ENCODE measurements at regions of chr1 and their contacts with region 1.

Region 1: DNA sequence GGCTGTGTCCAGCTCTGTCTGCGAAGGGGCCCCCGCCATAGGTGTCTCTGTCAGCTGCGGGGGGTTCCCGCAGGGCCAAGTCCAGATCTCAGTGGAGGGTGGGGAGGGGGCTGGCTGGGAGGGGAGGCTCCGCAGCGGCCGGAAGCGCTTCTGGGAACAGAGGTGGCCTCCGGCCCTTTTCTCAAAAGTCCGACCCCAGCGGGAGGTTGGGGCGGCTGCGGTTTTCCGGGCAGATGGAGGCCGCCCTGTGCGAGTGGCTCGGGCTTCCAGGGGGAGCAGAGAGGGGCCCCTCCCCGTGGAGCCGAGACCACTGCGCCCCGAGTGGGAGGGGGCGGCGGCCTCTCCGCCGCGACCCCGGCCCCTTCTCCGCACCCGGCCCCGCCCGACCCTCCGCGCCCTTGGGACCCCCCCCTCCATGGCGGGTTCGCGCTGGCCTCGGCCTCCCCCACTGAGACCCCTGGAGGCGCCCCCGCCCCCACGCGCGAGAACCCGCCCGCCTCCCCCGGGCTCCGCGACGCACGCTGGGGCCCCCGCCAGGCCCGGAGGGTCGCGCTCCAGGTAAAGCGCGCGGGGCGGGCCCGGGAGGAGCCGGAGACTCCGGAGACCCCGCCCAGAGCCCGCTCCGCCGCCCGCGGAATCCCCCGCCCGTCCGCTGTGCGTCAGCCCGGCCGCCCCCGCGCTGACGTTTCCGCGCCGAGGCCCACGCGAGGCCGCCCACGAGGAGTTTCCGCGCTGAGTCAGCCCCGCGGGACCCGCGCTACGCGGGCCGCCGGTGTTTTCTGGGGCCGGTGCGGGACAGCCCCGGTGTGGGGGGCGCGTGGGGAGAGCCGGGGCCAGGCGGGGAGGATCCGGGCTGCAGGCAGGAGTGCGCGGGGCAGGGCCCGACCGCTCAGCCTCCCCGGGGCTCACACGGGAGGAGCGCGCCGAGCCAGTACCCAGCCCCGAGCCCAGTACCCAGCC is 5.3 kb downstream of the TNFRSF18 start:
- DNase-seq: peak; percentile 88
- ATAC-seq: peak; percentile 85
- H3K4me3 Mint-ChIP-seq: peak overlapping the region; percentile 44
- H3K27ac Mint-ChIP-seq: peak overlapping the region; percentile 59
- H3K4me1 Mint-ChIP-seq: peaks cover 18% of the 10 kb centered on the region
- H3K27me3 Mint-ChIP-seq: no peaks in the 10 kb centered on the region
- CTCF ChIP-seq: no peak

Region 2: DNA sequence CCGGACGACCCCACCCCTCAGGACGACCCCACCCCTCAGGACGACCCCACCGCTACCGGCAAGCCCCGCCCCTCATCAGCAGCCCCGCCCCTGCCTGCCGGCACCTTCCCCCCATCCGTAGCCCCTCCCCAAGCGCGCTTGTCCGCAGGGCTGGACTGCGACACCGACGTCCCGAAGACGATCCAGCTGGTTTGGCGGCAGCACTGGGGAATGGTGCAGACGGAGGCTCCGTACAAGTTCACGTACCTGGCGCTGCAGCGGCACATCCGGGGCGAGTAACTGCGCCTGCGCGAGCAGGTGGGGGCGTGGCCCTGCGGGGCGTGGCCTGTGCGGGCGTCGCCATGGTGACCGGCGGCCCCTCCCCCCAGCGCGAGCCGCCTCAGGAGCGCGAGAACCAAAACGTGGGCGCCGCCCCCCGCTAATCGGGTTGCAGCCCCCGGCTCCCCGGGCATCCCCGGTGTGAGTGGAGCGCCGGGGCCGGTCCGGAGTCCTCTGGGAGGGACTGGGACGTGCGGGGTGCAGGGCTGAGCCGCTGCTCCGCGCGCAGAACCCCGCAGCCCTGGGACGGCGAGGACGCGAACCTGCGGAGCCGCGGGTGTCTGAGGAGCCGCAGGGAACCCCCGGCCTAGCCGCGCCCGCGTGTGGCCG is 131.9 kb before region 1 on chr1:
- CTCF ChIA-PET with region 1: no interaction called
- POLR2A ChIA-PET with region 1: no interaction called
- intact Hi-C with region 1: loop called (anchors 2 kb)
- DNase-seq: peak; percentile 95
- ATAC-seq: peak; percentile 47
- H3K4me3 Mint-ChIP-seq: peak overlapping the region; percentile 81
- H3K27ac Mint-ChIP-seq: peak overlapping the region; percentile 72
- H3K4me1 Mint-ChIP-seq: peaks cover 37% of the 10 kb centered on the region
- H3K27me3 Mint-ChIP-seq: peaks cover 3% of the 10 kb centered on the region
- CTCF ChIP-seq: no peak

Region 3: DNA sequence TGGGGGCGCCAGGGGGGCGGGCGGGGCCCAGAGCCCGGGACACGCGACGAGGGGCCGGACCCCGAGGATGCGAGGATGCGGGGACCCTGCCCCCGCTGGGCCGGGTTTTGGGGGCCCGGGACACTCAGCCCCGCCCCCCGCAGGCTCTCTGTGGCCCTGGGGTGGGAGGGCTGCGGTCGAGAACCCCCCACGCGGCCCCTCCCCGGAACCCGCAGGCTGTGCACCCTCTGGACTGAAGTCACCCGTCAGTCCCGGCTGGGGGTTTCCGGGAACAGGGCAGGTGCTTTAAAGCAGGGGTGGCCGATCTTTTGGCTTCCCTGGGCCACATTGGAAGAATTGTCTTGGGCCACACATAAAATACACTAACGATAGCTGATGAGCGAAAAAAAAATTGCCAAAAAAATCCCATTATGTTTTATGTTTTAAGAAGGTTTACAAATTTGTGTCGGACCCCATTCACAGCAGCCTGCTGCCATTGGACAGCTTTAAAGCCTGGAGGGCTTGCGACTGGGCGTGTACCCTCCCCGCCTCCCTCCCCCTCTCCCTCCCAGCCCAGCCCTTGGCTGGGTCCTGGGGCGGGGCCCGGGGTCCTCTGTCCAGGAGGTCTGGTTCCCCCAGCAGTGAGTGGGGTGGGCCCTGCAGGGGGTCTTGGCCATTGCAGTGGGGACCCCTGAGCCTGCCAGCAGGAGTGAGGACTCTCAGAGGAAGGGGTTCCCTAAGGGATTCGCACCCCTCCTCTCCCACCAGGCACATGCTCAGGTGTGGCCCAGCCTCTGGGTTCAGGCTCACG is 63.7 kb before region 1 on chr1:
- CTCF ChIA-PET with region 1: no interaction called
- POLR2A ChIA-PET with region 1: interaction called, 8 read pairs
- intact Hi-C with region 1: loop called (anchors 1 kb)
- DNase-seq: peak; percentile 78
- ATAC-seq: peak; percentile 75
- H3K4me3 Mint-ChIP-seq: peak overlapping the region; percentile 76
- H3K27ac Mint-ChIP-seq: peak overlapping the region; percentile 90
- H3K4me1 Mint-ChIP-seq: peaks cover 37% of the 10 kb centered on the region
- H3K27me3 Mint-ChIP-seq: no peaks in the 10 kb centered on the region
- CTCF ChIP-seq: no peak

Region 4: DNA sequence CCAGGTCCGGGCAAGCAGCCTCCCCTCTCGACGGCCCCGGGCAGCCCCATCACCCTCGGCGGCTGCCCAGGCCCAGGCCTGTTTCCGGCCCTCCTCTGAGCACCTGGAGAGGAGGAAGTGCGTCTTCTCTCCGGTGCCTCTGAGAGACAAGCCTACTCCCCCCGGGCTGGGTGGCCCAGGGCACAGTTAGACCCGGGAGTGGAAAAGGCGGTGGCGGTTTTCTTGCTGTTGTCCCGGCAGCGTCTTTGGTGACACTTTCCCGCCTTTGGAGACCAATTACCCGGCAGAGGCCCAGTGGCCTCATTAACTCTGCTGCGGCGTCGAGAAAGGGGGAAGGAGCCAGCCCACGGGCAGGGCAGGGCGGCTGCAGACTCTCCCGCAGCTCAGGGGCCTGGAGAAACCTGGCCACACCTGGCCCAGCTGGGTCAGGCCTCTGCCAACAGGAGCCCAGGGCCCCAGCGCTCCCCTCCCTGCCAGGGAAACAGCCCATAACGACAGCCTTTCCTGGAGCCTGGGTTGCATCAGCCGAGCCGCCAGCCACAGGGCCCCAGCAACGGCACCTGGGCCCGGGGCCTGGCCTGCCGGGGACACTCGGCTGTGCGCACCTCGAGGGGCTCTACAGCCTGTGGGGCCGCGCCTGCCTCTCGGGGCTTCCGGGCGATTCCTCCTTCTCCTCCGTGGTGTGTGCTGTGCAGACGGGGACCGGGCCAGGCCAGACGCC is 56.8 kb before region 1 on chr1:
- CTCF ChIA-PET with region 1: no interaction called
- POLR2A ChIA-PET with region 1: no interaction called
- intact Hi-C with region 1: loop called (anchors 1 kb)
- DNase-seq: peak; percentile 71
- ATAC-seq: peak; percentile 97
- H3K4me3 Mint-ChIP-seq: peak overlapping the region; percentile 41
- H3K27ac Mint-ChIP-seq: peak overlapping the region; percentile 93
- H3K4me1 Mint-ChIP-seq: peaks cover 33% of the 10 kb centered on the region
- H3K27me3 Mint-ChIP-seq: no peaks in the 10 kb centered on the region
- CTCF ChIP-seq: no peak

Region 5: DNA sequence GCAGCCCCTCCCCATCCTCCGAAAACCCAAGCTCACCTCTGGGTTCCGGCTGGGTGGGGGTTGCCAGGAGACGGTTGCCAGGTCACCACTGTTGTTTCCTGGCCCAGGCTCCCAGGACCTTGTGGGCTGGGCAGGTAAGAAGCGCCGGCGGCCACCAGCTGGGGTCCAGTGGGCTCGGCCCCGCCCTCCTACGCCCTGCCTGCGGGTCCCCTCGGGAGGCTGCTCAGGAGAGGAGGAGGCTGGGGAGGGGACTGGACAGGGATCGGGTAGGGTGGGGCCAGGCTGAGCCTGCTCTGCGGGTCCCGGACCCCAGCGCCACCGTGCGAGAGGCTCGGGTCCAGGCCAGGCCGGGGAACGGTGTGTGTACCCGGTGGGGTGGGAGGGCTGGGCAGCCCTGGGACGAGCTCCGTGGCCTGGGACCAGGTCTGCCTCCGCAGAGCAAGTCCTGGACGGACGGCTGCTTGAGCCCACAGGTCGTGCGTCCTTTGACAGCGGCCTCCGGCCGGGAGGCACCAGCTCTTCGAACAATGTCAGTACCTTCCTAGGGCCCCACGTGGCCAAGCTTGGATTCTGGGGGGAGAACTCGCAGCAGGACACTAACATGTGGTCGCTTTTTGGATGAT is 27.2 kb before region 1 on chr1 and contains the start of gene TTLL10:
- CTCF ChIA-PET with region 1: no interaction called
- POLR2A ChIA-PET with region 1: interaction called, 14 read pairs
- intact Hi-C with region 1: loop called (anchors 2 kb)
- DNase-seq: peak; percentile 59
- ATAC-seq: peak; percentile 21
- H3K4me3 Mint-ChIP-seq: peak within 1 kb of the TSS; percentile 28
- H3K27ac Mint-ChIP-seq: no peak within 1 kb of the TSS
- H3K4me1 Mint-ChIP-seq: peaks cover 49% of the 10 kb centered on the region
- H3K27me3 Mint-ChIP-seq: peaks cover 10% of the 10 kb centered on the region
- CTCF ChIP-seq: no peak
- total RNA-seq, gene TTLL10: 0.16 TPM in 1 of 2 replicates, not detected in the other

Region 6: GRCh38 chr1:1510912-1511532 is 309.9 kb after region 1 on chr1:
- CTCF ChIA-PET with region 1: no interaction called
- POLR2A ChIA-PET with region 1: no interaction called
- intact Hi-C with region 1: no loop called
- DNase-seq: no peak
- ATAC-seq: no peak
- H3K4me3 Mint-ChIP-seq: peak overlapping the region; percentile 91
- H3K27ac Mint-ChIP-seq: peak overlapping the region; percentile 80
- H3K4me1 Mint-ChIP-seq: peaks cover 14% of the 10 kb centered on the region
- H3K27me3 Mint-ChIP-seq: no peaks in the 10 kb centered on the region
- CTCF ChIP-seq: no peak

Measured in activated B cell treated with CpG ODN at 0.5 μM for 24 hours (primary cell).